ENCODE measurements at regions of chr18 and their contacts with region 1.

Region 1: GRCh38 chr18:50356036-50356945 is 18.6 kb upstream of the SKA1 start:
- DNase-seq: no peak
- ATAC-seq: peak; percentile 68
- H3K4me3 ChIP-seq: no peak overlapping the region
- H3K4me3 Mint-ChIP-seq: peak overlapping the region in 4 of 10 donors; percentile 12 to 55 (median 21)
- H3K27ac ChIP-seq: no peak overlapping the region
- H3K27ac Mint-ChIP-seq: peak overlapping the region in 5 of 9 donors; percentile 4 to 66 (median 49)
- H3K4me1 ChIP-seq: peaks cover 0 to 8% of the 10 kb centered on the region in 2 donors
- H3K4me1 Mint-ChIP-seq: peaks cover 0 to 11% (median 6%) of the 10 kb centered on the region in 7 donors
- H3K27me3 ChIP-seq: no peaks in the 10 kb centered on the region
- H3K27me3 Mint-ChIP-seq: peaks cover 11 to 44% (median 23%) of the 10 kb centered on the region in 5 donors

Region 2: DNA sequence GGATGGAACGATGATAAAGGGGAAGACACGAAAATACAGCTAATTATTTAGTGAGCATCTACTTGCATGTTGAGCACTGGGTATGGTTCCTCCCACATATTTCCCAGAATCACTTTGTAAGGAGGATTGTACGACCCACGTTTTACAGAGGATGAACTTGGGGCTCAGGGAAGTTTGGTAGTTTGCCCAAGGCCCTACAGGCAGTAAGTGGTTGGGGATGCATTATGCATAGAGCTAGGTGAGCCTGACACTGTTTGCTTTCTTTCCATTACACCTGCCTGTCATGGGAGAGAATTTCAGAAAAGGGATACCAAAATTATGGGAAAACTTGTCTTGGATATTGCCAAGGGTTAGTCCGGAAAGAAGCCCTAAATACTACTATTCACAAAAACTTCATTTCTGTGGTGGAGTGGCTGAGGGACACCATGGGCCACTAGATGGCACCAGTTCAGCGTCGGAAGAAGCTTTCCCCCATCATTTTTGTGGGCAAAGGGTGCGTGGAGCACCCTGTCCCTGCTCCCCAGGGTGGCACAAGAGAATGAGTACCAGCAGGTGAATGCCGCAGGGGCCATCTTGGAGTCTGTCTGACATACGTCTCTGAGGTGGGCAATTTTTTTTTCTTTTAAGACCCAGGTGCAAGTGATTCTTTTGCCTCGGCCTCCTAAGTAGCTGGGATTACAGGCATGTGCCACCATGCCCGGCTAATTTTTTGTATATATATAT is 845.7 kb before region 1 on chr18:
- CTCF ChIA-PET with region 1: interaction called, 7 read pairs
- POLR2A ChIA-PET with region 1: no interaction called
- intact Hi-C with region 1: loop called in 1 of 2 experiments (anchors 10 kb)
- DNase-seq: peak in 7 of 9 donors; percentile 31 to 56 (median 46)
- ATAC-seq: peak; percentile 85
- H3K4me3 ChIP-seq: no peak overlapping the region
- H3K4me3 Mint-ChIP-seq: no peak overlapping the region
- H3K27ac ChIP-seq: no peak overlapping the region
- H3K27ac Mint-ChIP-seq: no peak overlapping the region
- H3K4me1 ChIP-seq: no peaks in the 10 kb centered on the region
- H3K4me1 Mint-ChIP-seq: no peaks in the 10 kb centered on the region
- H3K27me3 ChIP-seq: no peaks in the 10 kb centered on the region
- H3K27me3 Mint-ChIP-seq: peaks cover 8 to 22% (median 15%) of the 10 kb centered on the region in 5 donors

Region 3: DNA sequence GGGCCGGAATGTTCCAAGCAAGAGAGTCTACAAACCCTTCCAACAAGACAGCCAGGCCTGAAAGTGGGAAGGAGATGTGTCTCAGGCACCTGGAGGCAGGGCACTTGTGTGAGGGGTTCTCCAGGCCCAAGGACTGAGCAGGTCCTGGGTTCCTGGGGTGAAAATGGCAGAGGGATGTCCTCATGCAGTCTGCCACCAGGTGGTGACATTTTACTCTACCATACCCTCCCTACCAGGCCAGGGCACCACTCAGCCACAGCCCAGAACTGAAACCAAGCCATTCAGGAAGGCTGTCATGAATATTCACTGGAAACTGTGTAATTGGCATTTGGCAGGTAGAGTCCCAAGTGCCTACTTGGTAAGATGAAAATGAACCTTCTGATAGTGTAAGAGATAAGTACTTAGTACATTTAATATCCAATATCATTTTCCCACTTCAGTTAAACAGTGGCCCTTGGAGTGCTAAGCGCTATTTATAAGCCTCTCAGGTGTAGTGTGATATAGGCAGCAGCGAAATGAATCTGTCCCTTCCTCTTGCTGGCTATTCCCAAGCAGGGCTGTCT is 346.4 kb before region 1 on chr18:
- CTCF ChIA-PET with region 1: interaction called, 6 read pairs
- POLR2A ChIA-PET with region 1: no interaction called
- intact Hi-C with region 1: loop called in 1 of 2 experiments (anchors 1 kb)
- DNase-seq: peak in 7 of 9 donors; percentile 2 to 42 (median 20)
- ATAC-seq: peak; percentile 73
- H3K4me3 ChIP-seq: no peak overlapping the region
- H3K4me3 Mint-ChIP-seq: no peak overlapping the region
- H3K27ac ChIP-seq: no peak overlapping the region
- H3K27ac Mint-ChIP-seq: no peak overlapping the region
- H3K4me1 ChIP-seq: no peaks in the 10 kb centered on the region
- H3K4me1 Mint-ChIP-seq: no peaks in the 10 kb centered on the region
- H3K27me3 ChIP-seq: no peaks in the 10 kb centered on the region
- H3K27me3 Mint-ChIP-seq: peaks cover 0 to 17% (median 0%) of the 10 kb centered on the region in 5 donors

Region 4: DNA sequence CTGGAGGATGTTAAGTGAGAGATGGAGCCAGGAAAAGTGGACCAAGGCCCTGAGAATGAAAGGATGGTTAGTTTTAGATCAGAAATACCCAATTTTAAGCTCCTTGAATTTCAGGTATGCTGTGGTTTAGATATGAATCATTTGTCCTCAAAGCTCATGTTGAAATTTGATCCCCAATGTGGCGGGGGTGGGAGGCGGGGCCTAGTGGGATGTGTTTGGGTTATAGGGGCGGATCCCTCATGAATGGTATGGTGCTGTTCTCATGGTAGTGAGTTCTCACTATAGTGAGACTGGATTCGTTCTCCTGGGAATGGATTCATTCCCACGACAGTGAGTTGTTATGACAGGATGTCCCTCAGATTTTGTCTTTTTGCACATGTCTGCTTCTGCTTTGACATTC is 172.7 kb before region 1 on chr18:
- CTCF ChIA-PET with region 1: no interaction called
- POLR2A ChIA-PET with region 1: no interaction called
- intact Hi-C with region 1: loop called in 1 of 2 experiments (anchors 10 kb)
- DNase-seq: no peak
- ATAC-seq: no peak
- H3K4me3 ChIP-seq: no peak overlapping the region
- H3K4me3 Mint-ChIP-seq: no peak overlapping the region
- H3K27ac ChIP-seq: no peak overlapping the region
- H3K27ac Mint-ChIP-seq: no peak overlapping the region
- H3K4me1 ChIP-seq: no peaks in the 10 kb centered on the region
- H3K4me1 Mint-ChIP-seq: no peaks in the 10 kb centered on the region
- H3K27me3 ChIP-seq: no peaks in the 10 kb centered on the region
- H3K27me3 Mint-ChIP-seq: peaks cover 10 to 39% (median 30%) of the 10 kb centered on the region in 5 donors

Region 5: DNA sequence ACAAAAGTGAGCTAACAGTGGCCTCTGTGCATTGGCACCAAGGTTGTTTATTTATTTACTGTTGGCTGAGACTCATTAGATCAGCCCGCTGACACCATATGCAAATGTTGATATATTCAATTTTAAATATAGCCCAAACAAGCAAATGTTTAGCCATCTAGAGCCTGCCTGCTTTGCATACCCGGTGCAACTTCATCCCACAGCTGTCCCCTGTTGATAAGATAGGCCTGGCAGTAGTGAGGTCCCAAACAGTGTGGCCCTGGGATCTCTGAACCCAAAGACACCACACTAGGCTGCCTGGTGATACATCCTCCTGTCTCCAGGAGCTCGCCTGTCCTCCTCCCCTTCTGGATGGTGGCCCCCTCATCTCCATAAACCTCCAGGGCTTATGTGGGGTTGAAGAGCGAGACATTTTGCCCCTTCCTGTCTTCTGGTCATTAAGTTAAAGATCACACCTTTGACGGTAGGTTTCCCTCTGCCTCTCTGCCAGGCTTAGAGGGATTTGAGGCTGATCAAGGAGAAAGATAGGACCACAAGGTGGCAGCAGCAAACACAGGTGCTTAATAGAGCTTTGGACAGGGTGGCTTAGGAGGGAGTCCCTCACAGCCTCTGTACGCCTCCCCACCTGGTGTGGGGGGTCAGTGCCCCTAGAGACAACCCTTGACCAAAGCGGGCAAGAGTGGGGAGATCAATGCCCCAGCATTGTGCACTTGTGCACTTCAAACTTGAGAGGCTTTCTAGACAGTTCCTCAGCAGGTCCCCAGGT is 137.7 kb before region 1 on chr18:
- CTCF ChIA-PET with region 1: interaction called, 33 read pairs
- POLR2A ChIA-PET with region 1: interaction called, 4 read pairs
- intact Hi-C with region 1: loop called in 1 of 2 experiments (anchors 1 kb)
- DNase-seq: peak in 4 of 9 donors; percentile 19 to 37 (median 28)
- ATAC-seq: peak; percentile 54
- H3K4me3 ChIP-seq: no peak overlapping the region
- H3K4me3 Mint-ChIP-seq: no peak overlapping the region
- H3K27ac ChIP-seq: no peak overlapping the region
- H3K27ac Mint-ChIP-seq: no peak overlapping the region
- H3K4me1 ChIP-seq: no peaks in the 10 kb centered on the region
- H3K4me1 Mint-ChIP-seq: no peaks in the 10 kb centered on the region
- H3K27me3 ChIP-seq: no peaks in the 10 kb centered on the region
- H3K27me3 Mint-ChIP-seq: peaks cover 21 to 47% (median 29%) of the 10 kb centered on the region in 5 donors

Region 6: GRCh38 chr18:50281295-50281971 is 74.9 kb before region 1 on chr18 and contains the start of gene MBD1:
- CTCF ChIA-PET with region 1: interaction called, 3 read pairs
- POLR2A ChIA-PET with region 1: interaction called, 4 read pairs
- intact Hi-C with region 1: loop called (anchors 1 kb)
- DNase-seq: peak; percentile 90 to 99 (median 97)
- ATAC-seq: peak; percentile 94
- H3K4me3 ChIP-seq: peak within 1 kb of the TSS; percentile 94
- H3K4me3 Mint-ChIP-seq: peak within 1 kb of the TSS; percentile 90 to 99 (median 97)
- H3K27ac ChIP-seq: peak within 1 kb of the TSS; percentile 88
- H3K27ac Mint-ChIP-seq: peak within 1 kb of the TSS; percentile 93 to 99 (median 97)
- H3K4me1 ChIP-seq: peaks cover 21 to 33% of the 10 kb centered on the region in 2 donors
- H3K4me1 Mint-ChIP-seq: peaks cover 24 to 53% (median 45%) of the 10 kb centered on the region in 7 donors
- H3K27me3 ChIP-seq: no peaks in the 10 kb centered on the region
- H3K27me3 Mint-ChIP-seq: peaks cover 0 to 2% (median 0%) of the 10 kb centered on the region in 5 donors
- total RNA-seq, gene MBD1: 97.5 to 158 (median 118) TPM

Region 7: GRCh38 chr18:50334546-50335152 is 21.6 kb before region 1 on chr18:
- CTCF ChIA-PET with region 1: no interaction called
- POLR2A ChIA-PET with region 1: no interaction called
- intact Hi-C with region 1: no loop called
- DNase-seq: no peak
- ATAC-seq: peak; percentile 26
- H3K4me3 ChIP-seq: no peak overlapping the region
- H3K4me3 Mint-ChIP-seq: no peak overlapping the region
- H3K27ac ChIP-seq: no peak overlapping the region
- H3K27ac Mint-ChIP-seq: no peak overlapping the region
- H3K4me1 ChIP-seq: no peaks in the 10 kb centered on the region
- H3K4me1 Mint-ChIP-seq: peaks cover 0 to 2% (median 0%) of the 10 kb centered on the region in 7 donors
- H3K27me3 ChIP-seq: no peaks in the 10 kb centered on the region
- H3K27me3 Mint-ChIP-seq: peaks cover 0 to 14% (median 6%) of the 10 kb centered on the region in 5 donors

Region 8: GRCh38 chr18:50374753-50375391 is 18.6 kb after region 1 on chr18 and contains the start of gene SKA1:
- CTCF ChIA-PET with region 1: interaction called, 6 read pairs
- POLR2A ChIA-PET with region 1: interaction called, 5 read pairs
- intact Hi-C with region 1: loop called in 1 of 2 experiments (anchors 1 kb)
- DNase-seq: peak; percentile 85 to 92 (median 89)
- ATAC-seq: peak; percentile 99
- H3K4me3 ChIP-seq: peak within 1 kb of the TSS; percentile 62
- H3K4me3 Mint-ChIP-seq: peak within 1 kb of the TSS; percentile 75 to 90 (median 80)
- H3K27ac ChIP-seq: peak within 1 kb of the TSS; percentile 71
- H3K27ac Mint-ChIP-seq: peak within 1 kb of the TSS; percentile 72 to 91 (median 87)
- H3K4me1 ChIP-seq: peaks cover 0 to 13% of the 10 kb centered on the region in 2 donors
- H3K4me1 Mint-ChIP-seq: peaks cover 0 to 34% (median 14%) of the 10 kb centered on the region in 7 donors
- H3K27me3 ChIP-seq: peaks cover 0 to 6% of the 10 kb centered on the region in 2 donors
- H3K27me3 Mint-ChIP-seq: peaks cover 0 to 8% (median 7%) of the 10 kb centered on the region in 5 donors
- total RNA-seq, gene SKA1: 0.27 to 24.8 (median 0.43) TPM

Measured in naive thymus-derived CD4-positive, alpha-beta T cell (primary cell).